ENCODE measurements at regions of chr3 and their contacts with region 1.

Region 1: GRCh38 chr3:30518181-30518864 is 88.1 kb upstream of the TGFBR2 start:
- DNase-seq: peak; percentile 99
- H3K4me3 ChIP-seq: no peak overlapping the region
- H3K27ac ChIP-seq: peak overlapping the region; percentile 93
- H3K4me1 ChIP-seq: peaks cover 66% of the 10 kb centered on the region
- H3K27me3 ChIP-seq: no peaks in the 10 kb centered on the region
- CTCF ChIP-seq: peak; percentile 17 to 37
- POLR2A ChIP-seq: peak; percentile 81

Region 2: GRCh38 chr3:30292192-30292893 is 226.0 kb before region 1 on chr3:
- CTCF ChIA-PET with region 1: no interaction called
- POLR2A ChIA-PET with region 1: no interaction called
- dilution Hi-C with region 1: no loop called
- intact Hi-C with region 1: loop called (anchors 1 kb)
- DNase-seq: peak; percentile 93
- H3K4me3 ChIP-seq: peak overlapping the region in 1 of 3 experiments; percentile 44
- H3K27ac ChIP-seq: peak overlapping the region; percentile 99
- H3K4me1 ChIP-seq: peaks cover 63% of the 10 kb centered on the region
- H3K27me3 ChIP-seq: no peaks in the 10 kb centered on the region
- CTCF ChIP-seq: no peak
- POLR2A ChIP-seq: no peak

Region 3: DNA sequence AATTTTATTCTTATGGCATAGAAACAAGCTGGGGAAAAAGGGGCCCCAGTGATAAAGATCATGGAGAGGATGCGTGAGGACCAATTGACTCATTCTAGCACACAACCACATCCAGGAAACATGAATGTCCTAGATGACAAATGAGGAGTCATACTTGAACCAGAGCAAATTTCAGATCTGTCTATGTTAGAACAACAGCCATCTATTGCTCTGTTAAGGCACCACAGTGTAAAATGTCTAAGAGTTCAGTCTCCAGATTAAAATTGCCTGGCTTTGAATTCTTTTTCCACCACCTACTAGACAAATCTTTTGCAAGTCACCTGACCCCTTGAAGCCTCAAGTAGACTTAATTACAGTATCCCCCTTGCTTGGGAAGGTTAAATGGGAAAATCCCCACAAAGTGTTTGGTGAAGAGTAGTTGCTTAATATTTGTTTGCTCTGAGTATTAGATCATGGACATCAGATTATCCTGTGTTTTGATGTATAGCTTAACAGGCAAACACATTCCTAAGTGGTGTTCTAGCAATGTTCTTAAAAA is 170.6 kb before region 1 on chr3:
- CTCF ChIA-PET with region 1: interaction called, 8 read pairs
- POLR2A ChIA-PET with region 1: no interaction called
- dilution Hi-C with region 1: no loop called
- intact Hi-C with region 1: loop called (anchors 1 kb)
- DNase-seq: peak; percentile 84
- H3K4me3 ChIP-seq: no peak overlapping the region
- H3K27ac ChIP-seq: peak overlapping the region; percentile 97
- H3K4me1 ChIP-seq: peaks cover 81% of the 10 kb centered on the region
- H3K27me3 ChIP-seq: no peaks in the 10 kb centered on the region
- CTCF ChIP-seq: no peak
- POLR2A ChIP-seq: peak; percentile 86

Region 4: GRCh38 chr3:30544812-30545211 is 26.5 kb after region 1 on chr3:
- CTCF ChIA-PET with region 1: interaction called, 8 read pairs
- POLR2A ChIA-PET with region 1: interaction called, 5 read pairs
- dilution Hi-C with region 1: no loop called
- intact Hi-C with region 1: loop called (anchors 1 kb)
- DNase-seq: peak; percentile 99
- H3K4me3 ChIP-seq: no peak overlapping the region
- H3K27ac ChIP-seq: peak overlapping the region; percentile 95
- H3K4me1 ChIP-seq: peaks cover 37% of the 10 kb centered on the region
- H3K27me3 ChIP-seq: no peaks in the 10 kb centered on the region
- CTCF ChIP-seq: no peak
- POLR2A ChIP-seq: no peak

Region 5: GRCh38 chr3:30658328-30659052 is 140.2 kb after region 1 on chr3:
- CTCF ChIA-PET with region 1: interaction called, 8 read pairs
- POLR2A ChIA-PET with region 1: interaction called, 4 read pairs
- dilution Hi-C with region 1: no loop called
- intact Hi-C with region 1: loop called (anchors 1 kb)
- DNase-seq: peak; percentile 95
- H3K4me3 ChIP-seq: no peak overlapping the region
- H3K27ac ChIP-seq: peak overlapping the region; percentile 98
- H3K4me1 ChIP-seq: peaks cover 100% of the 10 kb centered on the region
- H3K27me3 ChIP-seq: no peaks in the 10 kb centered on the region
- CTCF ChIP-seq: no peak
- POLR2A ChIP-seq: peak; percentile 68

Region 6: GRCh38 chr3:30693470-30694120 is 175.3 kb after region 1 on chr3:
- CTCF ChIA-PET with region 1: interaction called, 6 read pairs
- POLR2A ChIA-PET with region 1: no interaction called
- dilution Hi-C with region 1: no loop called
- intact Hi-C with region 1: loop called (anchors 1 kb)
- DNase-seq: peak; percentile 85
- H3K4me3 ChIP-seq: no peak overlapping the region
- H3K27ac ChIP-seq: peak overlapping the region; percentile 25
- H3K4me1 ChIP-seq: peaks cover 45% of the 10 kb centered on the region
- H3K27me3 ChIP-seq: no peaks in the 10 kb centered on the region
- CTCF ChIP-seq: peak; percentile 57 to 65
- POLR2A ChIP-seq: peak; percentile 24